ENCODE measurements at regions of chr11 and their contacts with region 1.

Region 1: DNA sequence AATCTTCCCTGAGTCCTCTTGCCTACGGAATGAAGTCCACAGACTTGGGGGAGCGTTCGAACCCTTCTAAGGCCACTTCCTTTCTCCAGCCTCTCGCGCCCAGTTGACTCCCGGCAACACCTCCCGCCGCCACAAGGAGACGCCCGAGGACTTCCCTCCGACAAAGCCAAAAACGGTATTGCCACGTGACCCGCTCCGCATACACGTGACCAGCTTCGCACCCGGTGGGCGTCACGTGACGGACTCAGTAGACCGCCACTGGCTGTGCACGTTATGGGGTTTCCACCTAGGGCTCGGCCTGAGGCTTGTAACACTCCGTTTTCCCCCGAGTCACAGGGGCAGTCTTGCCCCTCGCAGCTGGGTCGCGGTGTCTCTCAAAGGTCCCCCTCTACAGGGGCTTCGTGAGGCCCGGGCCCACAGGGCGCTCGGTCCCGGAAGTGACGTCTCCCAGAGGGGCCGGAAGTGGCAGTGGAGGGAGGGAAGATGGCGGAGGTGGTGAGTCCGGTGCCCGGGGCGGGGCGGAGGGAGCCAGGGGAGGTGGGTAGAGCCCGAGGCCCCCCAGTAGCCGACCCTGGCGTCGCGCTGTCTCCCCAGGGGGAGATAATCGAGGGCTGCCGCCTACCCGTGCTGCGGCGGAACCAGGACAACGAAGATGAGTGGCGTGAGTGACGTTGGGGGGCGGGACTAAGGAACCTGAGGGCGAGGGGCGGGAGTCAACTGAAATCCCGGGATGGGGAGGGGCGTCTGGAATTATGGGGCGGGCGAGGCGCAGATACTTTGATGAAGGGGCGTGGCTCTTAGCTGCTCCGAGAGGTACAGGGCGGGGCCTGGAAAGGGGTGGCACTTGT is at the start of gene KAT5:
- DNase-seq: peak; percentile 98
- ATAC-seq: peak; percentile 93 to 94
- total RNA-seq, gene KAT5: 46.6 to 47.3 TPM

Region 2: GRCh38 chr11:65615229-65615941 is 96.6 kb before region 1 on chr11 and contains the start of gene PCNX3:
- intact Hi-C with region 1: loop called in 1 of 2 experiments (anchors 5 kb)
- DNase-seq: peak; percentile 100
- ATAC-seq: peak; percentile 87
- total RNA-seq, gene PCNX3: 15.1 to 16.7 TPM

Region 3: GRCh38 chr11:65662799-65663638 is 49.0 kb before region 1 on chr11 and contains the start of gene RELA:
- intact Hi-C with region 1: loop called in 1 of 2 experiments (anchors 5 kb)
- DNase-seq: peak; percentile 95
- ATAC-seq: peak; percentile 89 to 91
- total RNA-seq, gene RELA: 36.1 to 56.2 TPM

Region 4: GRCh38 chr11:65779851-65780577 is 68.0 kb after region 1 on chr11:
- intact Hi-C with region 1: loop called in 1 of 2 experiments (anchors 10 kb)
- DNase-seq: peak; percentile 83
- ATAC-seq: peak; percentile 83 to 89

Region 5: GRCh38 chr11:65817835-65818742 is 106.1 kb after region 1 on chr11:
- intact Hi-C with region 1: loop called (anchors 2 to 10 kb)
- DNase-seq: peak; percentile 95
- ATAC-seq: peak; percentile 95 to 98

Region 6: GRCh38 chr11:65988791-65989592 is 277.0 kb after region 1 on chr11:
- intact Hi-C with region 1: loop called (anchors 5 to 10 kb)
- DNase-seq: peak; percentile 89
- ATAC-seq: peak; percentile 98 to 99

Measured in left cardiac atrium (tissue), 4 donors.